ENCODE measurements at regions of chr7 and their contacts with region 1.

Region 1: GRCh38 chr7:141654551-141654950 is 47.4 kb downstream of the DENND11 start:
- DNase-seq: peak; percentile 94
- H3K4me3 ChIP-seq: no peak overlapping the region
- H3K27ac ChIP-seq: peak overlapping the region; percentile 46
- H3K4me1 ChIP-seq: peaks cover 16% of the 10 kb centered on the region
- H3K27me3 ChIP-seq: no peaks in the 10 kb centered on the region
- CTCF ChIP-seq: peak; percentile 81
- POLR2A ChIP-seq: no peak

Region 2: DNA sequence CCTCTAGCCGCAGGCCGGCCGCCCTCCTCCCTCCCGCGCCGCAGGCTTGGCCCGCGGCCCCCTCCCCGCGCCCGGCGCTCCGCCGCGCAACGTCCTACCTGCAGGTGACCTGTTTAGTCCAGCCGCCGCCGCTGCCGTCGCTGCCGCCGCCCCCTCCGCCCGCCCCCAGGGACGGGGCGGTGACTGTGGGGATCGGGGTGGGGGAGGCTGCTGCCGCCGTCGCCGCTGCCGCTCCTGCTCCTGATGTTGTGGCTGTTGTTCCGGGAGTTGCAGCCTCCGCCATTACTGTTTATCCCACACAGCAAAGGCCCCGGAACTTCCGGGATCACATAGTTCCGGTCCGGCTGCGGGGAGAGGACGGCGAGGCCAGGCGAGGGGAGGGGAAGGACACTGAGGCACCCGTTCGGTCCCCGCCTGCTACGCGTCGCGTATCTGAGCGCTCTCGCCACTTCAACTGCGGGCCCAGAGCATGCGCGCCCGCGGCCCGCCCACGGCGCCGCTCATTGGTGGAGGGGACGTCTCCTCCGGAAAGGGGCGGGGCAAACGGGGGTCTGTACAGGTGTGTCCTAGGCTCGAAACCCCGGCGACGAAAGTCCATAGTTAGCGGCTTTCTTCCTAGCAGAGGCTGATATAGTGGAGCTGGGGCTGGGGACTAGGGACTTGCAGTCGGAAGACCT is 1175.4 kb before region 1 on chr7 and contains the start of gene MKRN1:
- CTCF ChIA-PET with region 1: no interaction called
- POLR2A ChIA-PET with region 1: no interaction called
- dilution Hi-C with region 1: no loop called
- intact Hi-C with region 1: loop called (anchors 5 kb)
- DNase-seq: peak; percentile 85
- H3K4me3 ChIP-seq: peak within 1 kb of the TSS; percentile 84 to 93 (median 89)
- H3K27ac ChIP-seq: peak within 1 kb of the TSS; percentile 39
- H3K4me1 ChIP-seq: peaks cover 13% of the 10 kb centered on the region
- H3K27me3 ChIP-seq: peaks cover 0 to 5% of the 10 kb centered on the region in 2 experiments
- CTCF ChIP-seq: no peak
- POLR2A ChIP-seq: peak; percentile 64
- total RNA-seq, gene MKRN1: 52.1 and 52.2 TPM in 2 replicates

Region 3: GRCh38 chr7:140673063-140673773 is 981.3 kb before region 1 on chr7:
- CTCF ChIA-PET with region 1: interaction called, 10 read pairs
- POLR2A ChIA-PET with region 1: no interaction called
- dilution Hi-C with region 1: no loop called
- intact Hi-C with region 1: loop called (anchors 10 kb)
- DNase-seq: peak; percentile 28
- H3K4me3 ChIP-seq: peak overlapping the region; percentile 22 to 76 (median 45)
- H3K27ac ChIP-seq: no peak overlapping the region
- H3K4me1 ChIP-seq: peaks cover 8% of the 10 kb centered on the region
- H3K27me3 ChIP-seq: peaks cover 0 to 3% of the 10 kb centered on the region in 2 experiments
- CTCF ChIP-seq: no peak
- POLR2A ChIP-seq: no peak

Region 4: DNA sequence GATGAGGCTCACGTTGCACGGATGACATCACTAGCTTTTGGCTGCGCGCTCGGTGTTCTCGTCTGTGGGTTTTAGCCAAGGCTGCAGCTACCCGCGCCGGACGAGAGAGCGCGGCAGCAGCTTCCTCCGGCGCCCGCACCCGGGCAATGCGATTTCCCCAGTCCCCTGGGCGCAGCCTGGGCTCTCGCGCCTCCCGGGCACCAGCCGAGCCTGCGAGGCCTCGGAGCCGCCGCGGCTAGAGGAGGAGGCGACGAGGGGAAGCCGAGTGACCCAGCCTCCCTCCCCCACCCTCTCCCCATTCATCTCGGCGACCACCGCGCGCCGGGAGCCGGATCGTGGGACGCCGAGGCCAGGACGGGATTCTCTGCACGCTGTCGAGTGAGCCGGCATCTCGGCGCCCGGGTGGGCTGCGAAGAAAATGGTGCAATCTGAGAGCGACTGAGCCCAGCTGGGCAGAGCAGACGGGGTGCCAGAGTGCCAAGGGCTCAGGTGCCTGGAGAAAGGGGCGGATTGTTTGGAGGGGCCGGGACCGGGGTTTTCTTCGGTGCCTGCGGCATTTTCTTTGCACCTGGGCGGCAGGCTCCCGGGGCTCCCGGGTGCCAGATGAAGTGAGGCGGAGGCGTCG is 581.9 kb before region 1 on chr7:
- CTCF ChIA-PET with region 1: interaction called, 3 read pairs
- POLR2A ChIA-PET with region 1: no interaction called
- dilution Hi-C with region 1: no loop called
- intact Hi-C with region 1: loop called (anchors 5 kb)
- DNase-seq: no peak
- H3K4me3 ChIP-seq: no peak overlapping the region
- H3K27ac ChIP-seq: no peak overlapping the region
- H3K4me1 ChIP-seq: peaks cover 10% of the 10 kb centered on the region
- H3K27me3 ChIP-seq: peaks cover 39 to 57% of the 10 kb centered on the region in 2 experiments
- CTCF ChIP-seq: no peak
- POLR2A ChIP-seq: no peak

Region 5: DNA sequence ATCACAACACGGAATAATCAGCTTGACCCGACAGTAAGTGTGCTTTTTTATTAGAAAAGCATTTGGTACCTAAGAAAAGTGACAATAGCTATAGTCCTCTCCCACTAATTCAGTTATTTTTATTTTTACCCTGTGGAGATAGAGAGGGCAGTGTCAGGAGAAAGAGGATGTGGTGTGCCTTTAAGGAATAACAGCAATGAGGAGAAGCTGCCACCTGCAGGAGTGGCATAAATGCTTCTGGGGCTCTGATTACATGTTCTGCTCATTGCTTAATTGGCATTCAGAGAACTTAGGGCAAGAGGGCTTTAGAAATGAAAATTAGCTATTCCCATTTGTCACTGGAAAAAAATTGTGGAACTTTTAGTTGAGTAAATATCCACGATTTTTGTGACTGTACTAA is 12.7 kb before region 1 on chr7:
- CTCF ChIA-PET with region 1: interaction called, 13 read pairs
- POLR2A ChIA-PET with region 1: no interaction called
- dilution Hi-C with region 1: no loop called
- intact Hi-C with region 1: no loop called
- DNase-seq: no peak
- H3K4me3 ChIP-seq: no peak overlapping the region
- H3K27ac ChIP-seq: no peak overlapping the region
- H3K4me1 ChIP-seq: peaks cover 3% of the 10 kb centered on the region
- H3K27me3 ChIP-seq: no peaks in the 10 kb centered on the region
- CTCF ChIP-seq: no peak
- POLR2A ChIP-seq: no peak

Region 6: DNA sequence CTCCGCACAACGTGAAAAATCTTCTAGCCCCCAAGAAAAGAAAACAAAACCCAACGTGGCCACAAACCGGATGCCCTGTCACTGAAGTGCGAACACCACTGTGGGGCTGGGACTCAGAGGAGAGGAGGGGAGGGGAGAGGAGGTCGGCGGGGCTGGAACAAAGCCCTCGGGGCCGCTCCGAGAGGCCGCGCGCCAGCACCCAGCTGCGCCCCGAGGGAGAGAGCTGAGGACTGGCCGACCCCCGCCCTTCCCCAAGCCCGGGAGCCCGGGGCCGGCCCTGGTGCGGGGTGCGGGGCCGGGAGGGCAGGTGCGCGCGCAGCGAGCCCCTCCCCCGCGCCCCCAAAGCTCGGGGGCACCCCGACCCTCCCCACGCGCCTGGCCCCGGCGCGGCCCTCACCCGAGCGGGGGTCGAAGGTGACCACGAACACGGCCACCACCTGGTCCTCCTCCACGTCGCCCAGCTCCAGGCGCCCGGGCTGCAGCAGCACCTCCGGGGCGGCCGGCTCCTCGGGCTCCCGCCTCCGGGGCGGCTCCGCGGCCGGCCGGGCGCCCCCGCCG is 47.0 kb after region 1 on chr7:
- CTCF ChIA-PET with region 1: interaction called, 21 read pairs
- POLR2A ChIA-PET with region 1: no interaction called
- dilution Hi-C with region 1: no loop called
- intact Hi-C with region 1: no loop called
- DNase-seq: peak; percentile 43
- H3K4me3 ChIP-seq: peak overlapping the region; percentile 63 to 92 (median 84)
- H3K27ac ChIP-seq: peak overlapping the region; percentile 16
- H3K4me1 ChIP-seq: peaks cover 10% of the 10 kb centered on the region
- H3K27me3 ChIP-seq: peaks cover 5 to 15% of the 10 kb centered on the region in 2 experiments
- CTCF ChIP-seq: no peak
- POLR2A ChIP-seq: no peak

Region 7: GRCh38 chr7:141785706-141786552 is 131.4 kb after region 1 on chr7:
- CTCF ChIA-PET with region 1: interaction called, 58 read pairs
- POLR2A ChIA-PET with region 1: no interaction called
- dilution Hi-C with region 1: no loop called
- intact Hi-C with region 1: loop called (anchors 1 kb)
- DNase-seq: peak; percentile 71
- H3K4me3 ChIP-seq: no peak overlapping the region
- H3K27ac ChIP-seq: no peak overlapping the region
- H3K4me1 ChIP-seq: peaks cover 21% of the 10 kb centered on the region
- H3K27me3 ChIP-seq: no peaks in the 10 kb centered on the region
- CTCF ChIP-seq: peak; percentile 66 to 72
- POLR2A ChIP-seq: no peak